K562 (cell line): ENCODE measurements at regions of chr15 and their contacts with region 1.

Region 1: GRCh38 chr15:89472785-89473256 is 23.6 kb downstream of the RHCG start:
- DNase-seq: peak; percentile 72 to 84 (median 78)
- ATAC-seq: peak; percentile 99
- H3K4me3 ChIP-seq: no peak overlapping the region
- H3K27ac ChIP-seq: no peak overlapping the region
- H3K4me1 ChIP-seq: no peaks in the 10 kb centered on the region
- H3K27me3 ChIP-seq: peaks cover 6 to 36% of the 10 kb centered on the region in 2 experiments; a peak in 4 of 5 replicates
- CTCF ChIP-seq: peak; percentile 93 to 96 (median 94)
- EP300 ChIP-seq: no peak
- POLR2A ChIP-seq: no peak
- RAD21 ChIP-seq: peak; percentile 70 to 90

Region 2: DNA sequence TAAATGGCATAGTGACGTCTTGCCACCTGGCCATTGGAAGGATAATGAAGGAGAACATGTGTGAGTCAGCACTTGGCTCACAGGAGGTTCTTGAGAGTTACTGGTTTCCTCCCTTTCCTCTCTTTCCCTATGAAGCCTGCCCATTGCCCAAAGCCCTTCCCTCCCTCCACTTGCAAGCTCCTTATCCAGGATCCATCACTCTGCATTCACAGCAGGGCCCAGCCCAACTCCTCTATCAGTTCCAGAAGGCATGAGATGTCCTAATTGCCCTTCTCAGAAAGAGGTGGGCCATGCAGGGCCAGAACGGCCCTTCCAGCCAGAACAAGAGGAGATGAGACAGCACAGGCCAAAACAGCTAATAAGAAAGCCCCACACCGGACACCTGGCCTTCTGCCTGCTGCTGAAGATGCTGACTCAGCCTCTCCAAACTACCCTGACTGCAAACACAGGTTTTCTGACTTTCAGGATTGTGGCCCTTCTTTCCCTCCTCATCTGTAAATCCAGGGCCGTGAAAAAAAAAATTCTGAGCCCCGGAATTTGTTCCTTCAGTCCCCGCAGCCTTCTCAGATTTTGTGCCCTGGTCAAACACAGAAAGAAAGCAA is 607.2 kb before region 1 on chr15:
- CTCF ChIA-PET with region 1: no interaction called
- POLR2A ChIA-PET with region 1: no interaction called
- in situ Hi-C with region 1: no loop called
- intact Hi-C with region 1: no loop called
- DNase-seq: peak; percentile 54 to 75 (median 62)
- ATAC-seq: peak; percentile 71
- H3K4me3 ChIP-seq: no peak overlapping the region
- H3K27ac ChIP-seq: peak overlapping the region; percentile 69
- H3K4me1 ChIP-seq: peaks cover 15 to 27% of the 10 kb centered on the region in 2 experiments; a peak in 4 of 5 replicates
- H3K27me3 ChIP-seq: peaks cover 4 to 18% of the 10 kb centered on the region in 2 experiments; a peak in 3 of 5 replicates
- CTCF ChIP-seq: no peak
- EP300 ChIP-seq: no peak; the same call in 1 of the 2 replicates
- POLR2A ChIP-seq: no peak
- RAD21 ChIP-seq: no peak

Region 3: DNA sequence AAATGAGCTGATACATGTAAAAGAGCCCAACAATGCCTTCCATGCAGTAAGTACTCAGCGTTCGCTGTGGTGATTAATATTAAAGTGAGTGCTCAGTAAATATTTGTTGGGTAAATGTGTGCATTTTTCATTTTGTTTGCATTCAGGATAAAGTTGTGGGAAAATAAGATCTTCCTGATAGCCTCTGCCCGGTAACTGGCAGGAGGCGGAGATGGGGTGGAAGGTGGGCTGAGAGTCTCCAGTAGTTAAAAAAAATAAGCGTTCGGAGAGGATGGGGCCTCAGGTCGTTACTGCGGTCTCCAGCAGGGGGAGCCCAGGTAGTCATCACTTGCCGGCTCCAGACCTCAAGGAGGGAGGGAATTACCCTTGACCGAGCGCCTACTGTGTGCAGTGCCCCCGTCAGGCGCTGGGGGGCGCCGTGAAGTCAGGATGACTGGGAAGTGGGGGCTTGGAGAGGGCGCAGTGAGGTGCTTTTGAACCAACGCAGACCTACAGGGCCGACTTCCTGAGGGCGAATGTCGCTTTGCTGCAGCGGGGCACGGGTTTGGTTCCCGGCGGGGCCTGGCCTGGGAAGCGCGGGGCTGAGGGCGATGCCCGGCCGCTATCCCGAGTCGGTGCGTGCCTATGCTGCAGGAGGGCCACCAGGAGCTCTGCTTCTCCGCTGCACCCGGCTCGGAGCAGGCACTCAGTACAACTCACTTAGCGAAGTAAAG is 56.5 kb before region 1 on chr15:
- CTCF ChIA-PET with region 1: interaction called, 5 read pairs
- POLR2A ChIA-PET with region 1: no interaction called
- in situ Hi-C with region 1: no loop called
- intact Hi-C with region 1: loop called (anchors 2 kb)
- DNase-seq: peak; percentile 86 to 92 (median 90)
- ATAC-seq: peak; percentile 95
- H3K4me3 ChIP-seq: no peak overlapping the region
- H3K27ac ChIP-seq: no peak overlapping the region
- H3K4me1 ChIP-seq: peaks cover 0 to 12% of the 10 kb centered on the region in 2 experiments; a peak in 2 of 5 replicates
- H3K27me3 ChIP-seq: peaks cover 5 to 48% of the 10 kb centered on the region in 2 experiments; a peak in 3 of 5 replicates
- CTCF ChIP-seq: peak; percentile 98 to 99 (median 99)
- EP300 ChIP-seq: no peak
- POLR2A ChIP-seq: no peak
- RAD21 ChIP-seq: peak; percentile 14 to 55; a peak in 3 of 4 replicates

Region 4: GRCh38 chr15:89442671-89443307 is 30.0 kb before region 1 on chr15:
- CTCF ChIA-PET with region 1: interaction called, 7 read pairs
- POLR2A ChIA-PET with region 1: no interaction called
- in situ Hi-C with region 1: no loop called
- intact Hi-C with region 1: loop called (anchors 1 kb)
- DNase-seq: peak; percentile 73 to 81 (median 76)
- ATAC-seq: peak; percentile 97
- H3K4me3 ChIP-seq: no peak overlapping the region
- H3K27ac ChIP-seq: no peak overlapping the region
- H3K4me1 ChIP-seq: peaks cover 0 to 7% of the 10 kb centered on the region in 2 experiments; a peak in 2 of 5 replicates
- H3K27me3 ChIP-seq: peaks cover 7 to 75% of the 10 kb centered on the region in 2 experiments; a peak in 4 of 5 replicates
- CTCF ChIP-seq: peak; percentile 81 to 88 (median 82)
- EP300 ChIP-seq: no peak
- POLR2A ChIP-seq: no peak
- RAD21 ChIP-seq: peak; percentile 45 to 68